MCF 10A (cell line): ENCODE measurements at regions of chr5 and their contacts with region 1.

Region 1: DNA sequence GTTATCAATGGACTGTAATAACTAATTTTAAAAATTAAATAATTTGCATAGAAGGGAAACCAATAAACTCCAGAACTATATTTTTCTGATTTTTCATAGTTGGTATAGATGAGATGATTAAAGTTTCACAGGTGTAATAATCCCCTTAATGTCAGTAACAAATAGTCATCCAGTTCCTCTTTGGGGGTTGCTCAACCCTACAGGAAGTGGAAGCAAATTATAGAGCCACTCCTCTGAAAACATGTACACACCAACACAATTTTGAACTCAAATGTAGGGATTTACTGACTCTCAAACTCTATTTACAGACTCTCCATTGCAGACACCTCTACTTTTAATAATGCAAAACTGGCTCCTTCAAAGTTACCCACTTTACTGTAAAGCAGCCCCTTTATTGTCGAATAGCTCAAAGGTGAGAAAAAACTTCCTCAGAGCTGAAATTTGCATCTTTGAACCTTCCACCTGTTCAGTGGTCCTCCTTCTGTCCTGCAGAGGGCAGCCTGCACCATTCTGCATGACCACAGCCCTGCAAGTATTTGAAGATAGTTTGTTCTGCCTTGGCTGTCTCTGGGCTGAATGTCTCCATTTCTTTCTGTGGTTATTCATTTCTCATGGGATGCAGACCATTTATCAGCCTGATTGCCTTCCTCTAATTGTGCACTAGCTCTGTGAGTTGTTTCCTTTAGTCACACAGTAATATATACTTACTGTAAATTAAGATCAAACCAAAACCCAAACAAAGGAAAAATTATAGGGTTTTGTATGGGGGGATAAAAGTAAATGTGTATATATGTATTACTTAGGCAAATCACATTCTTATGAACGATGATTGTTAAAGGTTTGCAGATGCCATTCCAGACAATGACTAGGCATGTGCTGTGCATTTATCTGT is 383.2 kb upstream of the SGCD start:
- DNase-seq: peak; percentile 5
- H3K4me3 Mint-ChIP-seq: no peak overlapping the region
- H3K27ac Mint-ChIP-seq: no peak overlapping the region
- H3K4me1 Mint-ChIP-seq: peaks cover 10% of the 10 kb centered on the region
- H3K27me3 Mint-ChIP-seq: peaks cover 16% of the 10 kb centered on the region
- CTCF ChIP-seq: peak; percentile 99

Region 2: DNA sequence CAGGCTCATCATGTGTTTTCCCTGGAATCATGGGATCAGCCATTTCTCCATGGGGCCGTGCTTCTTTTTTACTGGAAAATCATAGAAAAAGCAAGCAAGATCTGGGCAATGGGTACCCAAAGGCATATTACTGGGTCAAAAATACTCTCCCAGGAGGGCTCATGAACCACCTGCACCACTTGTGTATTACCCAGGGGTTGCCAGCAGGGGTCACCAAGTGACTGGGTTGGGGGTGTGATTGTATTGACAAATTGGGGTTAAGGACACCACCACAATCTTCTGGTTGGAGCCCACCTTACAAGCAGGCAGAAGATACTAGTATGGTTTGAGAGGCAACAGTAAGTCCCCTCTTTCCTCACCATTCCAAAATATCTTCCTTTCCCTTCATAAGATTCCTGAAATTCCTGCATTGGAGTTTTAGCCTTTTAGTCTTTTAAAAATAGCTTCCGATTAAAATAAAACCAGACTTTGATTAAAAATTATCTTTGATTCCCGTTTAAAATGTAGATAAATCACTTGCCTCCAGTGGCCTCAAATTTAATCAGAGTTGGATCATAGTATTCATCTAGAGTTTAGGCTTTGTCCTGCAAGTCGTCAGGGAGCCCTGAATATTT is 326.9 kb before region 1 on chr5:
- CTCF ChIA-PET with region 1: no interaction called
- POLR2A ChIA-PET with region 1: no interaction called
- intact Hi-C with region 1: loop called (anchors 1 kb)
- DNase-seq: peak; percentile 33
- H3K4me3 Mint-ChIP-seq: no peak overlapping the region
- H3K27ac Mint-ChIP-seq: no peak overlapping the region
- H3K4me1 Mint-ChIP-seq: no peaks in the 10 kb centered on the region
- H3K27me3 Mint-ChIP-seq: no peaks in the 10 kb centered on the region
- CTCF ChIP-seq: peak; percentile 99

Region 3: GRCh38 chr5:156394642-156395305 is 451.0 kb after region 1 on chr5:
- CTCF ChIA-PET with region 1: interaction called, 6 read pairs
- POLR2A ChIA-PET with region 1: no interaction called
- intact Hi-C with region 1: loop called (anchors 10 kb)
- DNase-seq: peak; percentile 79
- H3K4me3 Mint-ChIP-seq: no peak overlapping the region
- H3K27ac Mint-ChIP-seq: no peak overlapping the region
- H3K4me1 Mint-ChIP-seq: peaks cover 54% of the 10 kb centered on the region
- H3K27me3 Mint-ChIP-seq: no peaks in the 10 kb centered on the region
- CTCF ChIP-seq: no peak

Region 4: DNA sequence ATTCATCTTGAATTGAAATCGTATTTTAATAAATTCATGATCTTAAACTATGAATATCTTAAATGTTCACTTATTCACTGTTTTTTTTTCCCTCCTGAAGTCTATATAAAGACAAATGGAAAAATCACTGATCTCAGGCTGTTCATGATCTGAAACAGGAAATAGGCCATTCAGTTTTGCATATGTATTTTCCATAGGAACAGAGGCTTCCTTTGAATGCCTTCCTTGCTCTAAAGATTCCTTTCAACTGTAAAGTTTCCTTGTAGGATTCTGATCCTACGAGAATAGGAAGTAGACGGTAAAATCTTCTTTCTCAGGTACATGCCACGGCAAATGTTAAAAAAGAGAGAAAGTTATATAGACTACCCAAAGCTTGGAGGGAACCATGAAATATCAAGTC is 712.0 kb after region 1 on chr5:
- CTCF ChIA-PET with region 1: interaction called, 3 read pairs
- POLR2A ChIA-PET with region 1: no interaction called
- intact Hi-C with region 1: loop called (anchors 10 kb)
- DNase-seq: no peak
- H3K4me3 Mint-ChIP-seq: no peak overlapping the region
- H3K27ac Mint-ChIP-seq: no peak overlapping the region
- H3K4me1 Mint-ChIP-seq: peaks cover 5% of the 10 kb centered on the region
- H3K27me3 Mint-ChIP-seq: no peaks in the 10 kb centered on the region
- CTCF ChIP-seq: no peak

Region 5: GRCh38 chr5:156815988-156816599 is 872.3 kb after region 1 on chr5:
- CTCF ChIA-PET with region 1: interaction called, 92 read pairs
- POLR2A ChIA-PET with region 1: interaction called, 3 read pairs
- intact Hi-C with region 1: loop called (anchors 1 kb)
- DNase-seq: peak; percentile 8
- H3K4me3 Mint-ChIP-seq: no peak overlapping the region
- H3K27ac Mint-ChIP-seq: no peak overlapping the region
- H3K4me1 Mint-ChIP-seq: no peaks in the 10 kb centered on the region
- H3K27me3 Mint-ChIP-seq: no peaks in the 10 kb centered on the region
- CTCF ChIP-seq: peak; percentile 69

Region 6: DNA sequence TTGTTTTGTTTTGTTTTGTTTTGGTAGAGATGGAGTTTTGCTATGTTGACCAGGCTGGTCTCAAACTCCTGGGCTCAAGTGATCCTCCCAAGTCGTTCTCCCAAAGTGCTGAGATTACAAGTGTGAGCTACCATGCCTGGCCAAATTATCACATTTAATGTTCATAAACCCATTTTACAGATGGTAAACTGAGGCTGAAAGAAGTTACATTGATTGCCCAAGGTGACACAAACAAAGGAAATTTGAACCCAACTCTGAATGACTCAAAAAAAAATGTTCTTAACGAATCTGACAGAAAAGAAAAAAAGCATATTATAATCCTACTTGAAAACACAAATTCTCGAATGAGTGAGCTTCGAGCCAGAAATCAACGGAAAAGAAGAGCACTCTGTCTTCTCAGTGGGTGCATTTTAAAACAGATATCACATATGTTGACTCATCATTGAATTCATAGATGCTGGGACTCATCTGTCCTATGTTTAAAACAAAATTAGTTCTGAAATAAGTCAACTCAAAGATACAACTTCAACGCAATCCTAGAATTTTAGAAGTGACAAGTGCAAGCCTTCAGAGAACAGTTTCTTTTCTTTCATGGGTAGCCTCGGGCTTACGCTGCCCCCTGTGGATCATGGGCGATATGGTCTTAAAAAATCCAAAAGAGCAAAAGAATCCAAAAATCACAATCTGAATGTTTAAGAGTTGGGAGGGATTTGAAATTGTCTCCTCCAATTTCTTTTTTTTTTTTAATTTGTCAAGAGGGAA is 990.9 kb after region 1 on chr5:
- CTCF ChIA-PET with region 1: no interaction called
- POLR2A ChIA-PET with region 1: no interaction called
- intact Hi-C with region 1: loop called (anchors 10 kb)
- DNase-seq: no peak
- H3K4me3 Mint-ChIP-seq: no peak overlapping the region
- H3K27ac Mint-ChIP-seq: no peak overlapping the region
- H3K4me1 Mint-ChIP-seq: no peaks in the 10 kb centered on the region
- H3K27me3 Mint-ChIP-seq: peaks cover 18% of the 10 kb centered on the region
- CTCF ChIP-seq: peak; percentile 51